ENCODE measurements at regions of chr2 and their contacts with region 1.

Region 1: DNA sequence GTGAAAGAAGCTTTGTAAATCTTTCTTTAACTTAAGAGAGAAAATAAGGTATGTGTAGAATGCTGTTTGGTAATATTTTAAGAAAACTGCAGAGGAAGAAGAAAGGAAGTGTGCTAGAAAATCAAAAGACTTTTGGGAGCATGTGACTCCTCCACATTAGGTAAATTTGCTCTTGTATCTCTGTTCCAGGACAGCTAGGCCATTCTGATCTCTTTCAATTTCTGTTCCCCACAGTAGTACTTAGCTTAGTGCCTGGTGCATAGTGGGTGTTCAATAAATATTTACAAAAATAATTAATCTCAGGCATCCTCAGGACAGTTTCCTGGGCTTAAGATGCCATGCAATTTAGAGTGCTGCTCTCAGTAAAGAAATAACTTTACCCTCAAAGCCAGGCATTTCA is 105.0 kb downstream of the GPD2 start:
- DNase-seq: no peak
- H3K4me3 ChIP-seq: no peak overlapping the region
- H3K27ac ChIP-seq: no peak overlapping the region
- H3K4me1 ChIP-seq: peaks cover 6% of the 10 kb centered on the region
- H3K27me3 ChIP-seq: no peaks in the 10 kb centered on the region
- CTCF ChIP-seq: no peak

Region 2: DNA sequence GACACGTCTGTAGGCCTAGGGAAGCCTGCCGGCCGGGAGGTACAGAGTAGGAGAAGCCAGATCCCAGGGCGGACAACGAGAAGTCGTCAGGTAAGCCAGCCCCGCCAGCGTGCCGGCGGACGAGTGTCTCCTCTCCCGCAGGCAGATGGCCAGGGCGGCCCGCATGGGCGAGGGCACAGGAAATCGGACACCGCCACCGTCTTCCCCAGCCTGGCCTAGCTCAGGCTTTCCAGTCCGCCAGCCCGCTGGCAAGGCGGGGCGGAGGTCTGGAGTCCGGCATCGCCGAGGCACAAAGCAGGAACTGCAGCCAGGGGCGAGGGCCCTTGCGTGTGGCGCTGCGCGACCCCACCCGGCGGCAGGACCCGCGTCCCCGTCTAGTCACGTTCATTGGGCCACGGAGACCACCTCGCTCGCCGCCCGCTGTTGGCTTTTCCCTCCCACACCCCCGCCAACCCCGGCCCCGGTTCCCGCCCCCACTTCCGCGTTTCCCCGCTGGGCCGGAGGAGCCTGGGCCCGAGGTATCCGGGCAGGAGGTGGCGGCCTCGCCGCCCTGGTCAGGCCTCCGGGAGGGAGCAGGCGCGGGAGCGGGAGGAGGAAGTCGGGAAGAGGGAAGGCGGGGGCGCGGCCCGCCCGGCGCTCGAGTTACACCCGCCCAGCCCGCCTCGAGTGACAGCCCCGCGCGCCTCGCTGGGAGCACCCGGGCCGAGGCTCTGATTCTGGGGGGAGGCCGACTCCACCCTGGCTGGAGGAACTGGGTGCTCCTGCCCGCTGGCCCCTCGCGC is 105.3 kb before region 1 on chr2 and contains the start of gene GPD2:
- CTCF ChIA-PET with region 1: no interaction called
- dilution Hi-C with region 1: no loop called
- in situ Hi-C with region 1: no loop called
- intact Hi-C with region 1: no loop called
- DNase-seq: peak; percentile 61
- H3K4me3 ChIP-seq: peak within 1 kb of the TSS; percentile 63 to 85 (median 65)
- H3K27ac ChIP-seq: peak within 1 kb of the TSS; percentile 90
- H3K4me1 ChIP-seq: peaks cover 39% of the 10 kb centered on the region
- H3K27me3 ChIP-seq: no peaks in the 10 kb centered on the region
- CTCF ChIP-seq: no peak
- total RNA-seq, gene GPD2: 30.0 to 39.3 TPM

Region 3: GRCh38 chr2:156625360-156626170 is 84.3 kb after region 1 on chr2:
- CTCF ChIA-PET with region 1: no interaction called
- dilution Hi-C with region 1: no loop called
- in situ Hi-C with region 1: no loop called
- intact Hi-C with region 1: loop called (anchors 2 kb)
- DNase-seq: no peak
- H3K4me3 ChIP-seq: no peak overlapping the region
- H3K27ac ChIP-seq: no peak overlapping the region
- H3K4me1 ChIP-seq: no peaks in the 10 kb centered on the region
- H3K27me3 ChIP-seq: no peaks in the 10 kb centered on the region
- CTCF ChIP-seq: no peak

Measured in mammary epithelial cell (primary cell).